ENCODE measurements at regions of chr12 and their contacts with region 1.

Region 1: GRCh38 chr12:89162704-89163261 is 189.5 kb downstream of the DUSP6 start:
- DNase-seq: peak; percentile 90
- H3K4me3 Mint-ChIP-seq: no peak overlapping the region
- H3K27ac Mint-ChIP-seq: no peak overlapping the region
- H3K4me1 Mint-ChIP-seq: peaks cover 13% of the 10 kb centered on the region
- H3K27me3 Mint-ChIP-seq: no peaks in the 10 kb centered on the region

Region 2: DNA sequence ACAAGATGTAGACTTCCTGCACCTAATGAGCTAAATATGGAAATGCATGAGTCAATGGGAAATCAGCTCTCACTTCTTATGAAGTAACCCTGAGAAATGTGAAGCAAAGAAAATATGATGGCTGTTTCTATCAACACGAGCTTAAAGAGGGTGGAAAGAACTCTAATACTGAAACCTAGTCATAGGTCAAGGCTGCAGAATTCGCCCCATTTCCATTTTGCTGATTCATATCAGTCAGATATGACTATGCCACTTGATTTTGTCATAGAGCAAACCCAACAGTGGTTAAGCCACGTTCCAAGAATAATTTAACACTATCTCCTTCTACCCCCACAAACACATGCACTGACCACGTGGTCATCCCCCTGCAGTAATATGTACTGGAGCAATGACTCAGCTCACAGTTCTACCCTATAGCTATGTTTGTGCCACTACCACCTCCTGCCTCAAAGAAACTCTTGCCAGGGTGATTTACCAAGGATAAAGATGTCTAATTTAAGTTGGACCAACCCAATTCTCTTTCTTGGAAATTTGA is 863.1 kb before region 1 on chr12:
- CTCF ChIA-PET with region 1: no interaction called
- POLR2A ChIA-PET with region 1: no interaction called
- intact Hi-C with region 1: loop called (anchors 5 kb)
- DNase-seq: peak; percentile 75
- H3K4me3 Mint-ChIP-seq: no peak overlapping the region
- H3K27ac Mint-ChIP-seq: peak overlapping the region; percentile 72
- H3K4me1 Mint-ChIP-seq: peaks cover 27% of the 10 kb centered on the region
- H3K27me3 Mint-ChIP-seq: no peaks in the 10 kb centered on the region

Region 3: DNA sequence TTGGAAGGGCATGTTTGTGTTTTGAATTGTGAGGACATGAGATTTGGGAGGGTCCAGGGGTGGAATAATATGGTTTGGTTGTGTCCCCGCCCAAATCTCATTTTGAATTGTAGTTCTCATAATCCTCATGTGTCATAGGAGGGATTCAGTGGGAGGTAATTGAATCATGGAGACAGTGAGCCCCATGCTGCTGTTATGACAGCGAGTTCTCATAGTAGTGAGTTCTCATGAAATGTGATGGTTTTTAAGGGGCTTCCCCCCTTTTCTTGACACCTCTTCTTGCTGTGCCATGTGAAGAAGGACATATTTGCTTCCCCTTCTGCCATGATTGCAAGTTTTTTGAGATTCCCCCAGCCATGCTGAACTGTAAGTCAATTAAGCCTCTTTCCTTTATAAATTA is 70.5 kb before region 1 on chr12:
- CTCF ChIA-PET with region 1: no interaction called
- POLR2A ChIA-PET with region 1: no interaction called
- intact Hi-C with region 1: loop called (anchors 2 kb)
- DNase-seq: peak; percentile 48
- H3K4me3 Mint-ChIP-seq: no peak overlapping the region
- H3K27ac Mint-ChIP-seq: peak overlapping the region; percentile 92
- H3K4me1 Mint-ChIP-seq: peaks cover 12% of the 10 kb centered on the region
- H3K27me3 Mint-ChIP-seq: peaks cover 3% of the 10 kb centered on the region

Region 4: GRCh38 chr12:89179983-89180382 is 17.2 kb after region 1 on chr12:
- CTCF ChIA-PET with region 1: interaction called, 5 read pairs
- POLR2A ChIA-PET with region 1: interaction called, 7 read pairs
- intact Hi-C with region 1: loop called (anchors 1 kb)
- DNase-seq: no peak
- H3K4me3 Mint-ChIP-seq: no peak overlapping the region
- H3K27ac Mint-ChIP-seq: peak overlapping the region; percentile 74
- H3K4me1 Mint-ChIP-seq: peaks cover 35% of the 10 kb centered on the region
- H3K27me3 Mint-ChIP-seq: no peaks in the 10 kb centered on the region

Region 5: DNA sequence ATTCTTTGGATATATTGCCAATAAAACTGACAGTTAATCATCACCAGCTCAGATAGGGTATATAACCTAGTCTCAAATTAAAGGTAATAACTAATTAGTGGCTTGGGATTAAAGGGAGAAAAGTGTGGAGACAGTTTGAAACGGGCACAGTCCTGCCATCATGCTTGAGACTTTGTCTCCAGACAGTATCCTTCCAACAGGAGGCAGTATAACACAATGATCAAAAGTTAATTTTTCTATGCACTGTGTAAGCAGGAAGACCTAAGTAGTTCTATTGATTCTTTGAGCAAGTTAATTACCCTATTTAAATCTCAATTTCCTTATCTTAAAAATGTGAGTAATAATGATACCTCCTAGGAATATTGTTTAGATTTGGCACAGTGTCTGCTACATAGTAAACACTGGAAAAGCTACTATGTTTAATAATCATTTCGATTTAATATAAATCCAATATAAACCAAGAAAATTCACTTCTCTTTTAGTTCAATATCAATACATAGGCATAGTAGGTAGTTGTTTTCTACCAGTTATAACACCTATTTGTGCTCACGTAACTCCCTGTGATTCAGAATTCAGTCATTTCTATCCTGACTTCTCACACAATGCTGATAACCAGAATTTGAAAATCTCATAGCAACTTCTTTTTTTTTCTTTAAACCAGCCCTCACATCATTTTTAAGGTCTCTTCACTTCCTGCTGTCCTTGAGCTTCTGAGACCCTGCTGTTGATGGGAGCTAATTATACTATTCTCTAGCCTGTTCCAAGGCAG is 308.1 kb after region 1 on chr12:
- CTCF ChIA-PET with region 1: no interaction called
- POLR2A ChIA-PET with region 1: no interaction called
- intact Hi-C with region 1: loop called (anchors 2 kb)
- DNase-seq: no peak
- H3K4me3 Mint-ChIP-seq: no peak overlapping the region
- H3K27ac Mint-ChIP-seq: peak overlapping the region; percentile 64
- H3K4me1 Mint-ChIP-seq: peaks cover 58% of the 10 kb centered on the region
- H3K27me3 Mint-ChIP-seq: no peaks in the 10 kb centered on the region

Region 6: GRCh38 chr12:89524541-89525285 is 361.9 kb after region 1 on chr12 and contains the start of gene GALNT4:
- CTCF ChIA-PET with region 1: interaction called, 3 read pairs
- POLR2A ChIA-PET with region 1: no interaction called
- intact Hi-C with region 1: loop called (anchors 10 kb)
- DNase-seq: peak; percentile 86
- H3K4me3 Mint-ChIP-seq: peak within 1 kb of the TSS; percentile 99
- H3K27ac Mint-ChIP-seq: peak within 1 kb of the TSS; percentile 98
- H3K4me1 Mint-ChIP-seq: peaks cover 45% of the 10 kb centered on the region
- H3K27me3 Mint-ChIP-seq: no peaks in the 10 kb centered on the region
- total RNA-seq, gene GALNT4: 5.8 to 6.0 TPM

Measured in activated CD4-positive, alpha-beta memory T cell treated with anti-CD3 and anti-CD28 coated beads for 36 hours (primary cell).